Activated naive CD4-positive, alpha-beta T cell treated with anti-CD3 and anti-CD28 coated beads for 36 hours (primary cell): ENCODE measurements at regions of chr2 and their contacts with region 1.

Region 1: GRCh38 chr2:207625018-207625907 is at the start of gene METTL21A:
- DNase-seq: peak; percentile 95
- H3K4me3 Mint-ChIP-seq: peak within 1 kb of the TSS; percentile 88
- H3K27ac Mint-ChIP-seq: peak within 1 kb of the TSS; percentile 89
- H3K4me1 Mint-ChIP-seq: peaks cover 56% of the 10 kb centered on the region
- H3K27me3 Mint-ChIP-seq: no peaks in the 10 kb centered on the region
- total RNA-seq, gene METTL21A: 18.6 to 19.0 TPM

Region 2: GRCh38 chr2:206159346-206160124 is 1465.7 kb before region 1 on chr2 and contains the starts of genes EEF1B2 and NDUFS1:
- CTCF ChIA-PET with region 1: no interaction called
- intact Hi-C with region 1: loop called (anchors 1 kb)
- DNase-seq: peak; percentile 98
- H3K4me3 Mint-ChIP-seq: peak within 1 kb of the TSS; percentile 96
- H3K27ac Mint-ChIP-seq: peak within 1 kb of the TSS; percentile 97
- H3K4me1 Mint-ChIP-seq: peaks cover 50% of the 10 kb centered on the region
- H3K27me3 Mint-ChIP-seq: no peaks in the 10 kb centered on the region
- total RNA-seq, gene EEF1B2: 1,328 to 1,373 TPM
- total RNA-seq, gene NDUFS1: 81.1 to 83.3 TPM

Region 3: DNA sequence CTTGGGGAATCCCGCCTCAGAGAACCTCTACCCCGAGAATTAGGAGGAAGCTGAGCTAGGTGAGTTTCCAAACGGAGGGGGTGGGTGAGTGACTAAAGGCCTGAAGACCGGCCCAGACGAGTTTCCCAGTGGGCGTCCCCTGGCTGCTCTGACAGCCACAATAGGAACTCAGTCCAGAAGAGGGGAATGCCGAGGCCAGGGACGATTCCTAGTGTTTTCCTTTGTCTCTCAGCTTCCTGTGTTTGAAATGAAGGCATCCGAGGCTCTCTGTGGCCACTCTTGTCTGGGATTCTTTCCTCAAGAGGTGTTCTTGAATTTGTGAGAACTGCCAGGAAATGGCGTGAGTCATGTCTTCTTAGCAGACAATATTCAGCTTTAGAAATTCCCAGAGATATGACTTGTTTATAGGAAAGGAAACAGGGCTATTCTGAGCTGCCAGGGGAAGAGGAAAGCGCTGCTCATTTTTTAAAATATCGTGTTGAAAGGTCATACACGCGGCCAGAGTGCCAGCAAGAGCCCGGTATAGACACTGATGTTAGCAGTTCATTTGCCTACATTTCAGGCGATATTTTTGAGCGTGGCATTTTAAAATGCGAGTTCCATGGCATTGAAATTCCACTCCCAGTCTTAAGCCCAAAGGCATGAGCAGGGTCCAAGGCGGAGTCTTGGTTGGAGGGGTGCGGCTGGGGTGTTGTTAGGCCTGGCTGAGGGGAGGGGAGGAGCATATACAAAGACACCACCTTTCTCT is 290.5 kb before region 1 on chr2:
- CTCF ChIA-PET with region 1: no interaction called
- intact Hi-C with region 1: loop called (anchors 5 kb)
- DNase-seq: peak; percentile 63
- H3K4me3 Mint-ChIP-seq: no peak overlapping the region
- H3K27ac Mint-ChIP-seq: peak overlapping the region; percentile 84
- H3K4me1 Mint-ChIP-seq: peaks cover 71% of the 10 kb centered on the region
- H3K27me3 Mint-ChIP-seq: no peaks in the 10 kb centered on the region

Region 4: GRCh38 chr2:207688597-207688996 is 63.3 kb after region 1 on chr2:
- CTCF ChIA-PET with region 1: interaction called, 3 read pairs
- intact Hi-C with region 1: loop called (anchors 1 kb)
- DNase-seq: no peak
- H3K4me3 Mint-ChIP-seq: no peak overlapping the region
- H3K27ac Mint-ChIP-seq: no peak overlapping the region
- H3K4me1 Mint-ChIP-seq: peaks cover 13% of the 10 kb centered on the region
- H3K27me3 Mint-ChIP-seq: no peaks in the 10 kb centered on the region

Region 5: DNA sequence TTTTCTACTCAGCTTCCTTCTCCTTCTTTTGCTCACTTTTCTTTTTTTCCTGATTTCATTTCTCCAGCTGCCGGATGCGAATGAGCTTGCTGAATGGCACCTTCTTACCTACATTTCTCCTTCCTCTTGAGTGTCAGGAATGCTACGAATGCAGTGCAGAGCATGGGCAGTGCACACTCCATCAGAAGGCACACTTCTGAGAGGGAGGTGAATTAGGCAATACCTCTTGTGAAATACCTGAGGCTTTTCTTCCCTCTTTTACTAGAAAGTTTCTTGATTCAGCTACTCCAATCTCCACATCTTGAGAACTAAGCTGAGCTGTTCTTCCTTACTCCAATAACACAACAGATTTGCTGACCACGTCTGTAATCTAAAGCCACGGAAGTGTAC is 348.9 kb after region 1 on chr2:
- CTCF ChIA-PET with region 1: interaction called, 12 read pairs
- intact Hi-C with region 1: loop called (anchors 1 kb)
- DNase-seq: no peak
- H3K4me3 Mint-ChIP-seq: no peak overlapping the region
- H3K27ac Mint-ChIP-seq: no peak overlapping the region
- H3K4me1 Mint-ChIP-seq: peaks cover 17% of the 10 kb centered on the region
- H3K27me3 Mint-ChIP-seq: no peaks in the 10 kb centered on the region

Region 6: GRCh38 chr2:208040199-208041171 is 415.2 kb after region 1 on chr2:
- CTCF ChIA-PET with region 1: interaction called, 15 read pairs
- intact Hi-C with region 1: loop called (anchors 1 kb)
- DNase-seq: peak; percentile 93
- H3K4me3 Mint-ChIP-seq: no peak overlapping the region
- H3K27ac Mint-ChIP-seq: no peak overlapping the region
- H3K4me1 Mint-ChIP-seq: peaks cover 3% of the 10 kb centered on the region
- H3K27me3 Mint-ChIP-seq: peaks cover 2% of the 10 kb centered on the region